Activated T-helper 1 cell treated with anti-CD3 and anti-CD28 coated beads, Interleukin-12 subunit alpha, Interleukin-12 subunit beta, Interleukin-2, Interleukin-4 antibody, amounts not matched to agents 30 ng/mL and 10 ng/mL and 1 ng/mL, durations not matched to agents 14 hours and 24 hours and 36 hours (primary cell): ENCODE measurements at regions of chr3 and their contacts with region 1.

Region 1: GRCh38 chr3:197298341-197298857 is at the start of gene DLG1:
- DNase-seq: peak; percentile 64
- H3K4me3 Mint-ChIP-seq: peak within 1 kb of the TSS; percentile 95
- H3K27ac Mint-ChIP-seq: peak within 1 kb of the TSS; percentile 96
- H3K4me1 Mint-ChIP-seq: peaks cover 39% of the 10 kb centered on the region
- H3K27me3 Mint-ChIP-seq: peaks cover 28% of the 10 kb centered on the region
- total RNA-seq, gene DLG1: 85.0 and 87.1 TPM in 2 replicates

Region 2: GRCh38 chr3:197456261-197457091 is 158.1 kb after region 1 on chr3:
- intact Hi-C with region 1: loop called (anchors 5 kb)
- DNase-seq: peak; percentile 36
- H3K4me3 Mint-ChIP-seq: peak overlapping the region; percentile 87
- H3K27ac Mint-ChIP-seq: peak overlapping the region; percentile 88
- H3K4me1 Mint-ChIP-seq: peaks cover 22% of the 10 kb centered on the region
- H3K27me3 Mint-ChIP-seq: peaks cover 22% of the 10 kb centered on the region

Region 3: DNA sequence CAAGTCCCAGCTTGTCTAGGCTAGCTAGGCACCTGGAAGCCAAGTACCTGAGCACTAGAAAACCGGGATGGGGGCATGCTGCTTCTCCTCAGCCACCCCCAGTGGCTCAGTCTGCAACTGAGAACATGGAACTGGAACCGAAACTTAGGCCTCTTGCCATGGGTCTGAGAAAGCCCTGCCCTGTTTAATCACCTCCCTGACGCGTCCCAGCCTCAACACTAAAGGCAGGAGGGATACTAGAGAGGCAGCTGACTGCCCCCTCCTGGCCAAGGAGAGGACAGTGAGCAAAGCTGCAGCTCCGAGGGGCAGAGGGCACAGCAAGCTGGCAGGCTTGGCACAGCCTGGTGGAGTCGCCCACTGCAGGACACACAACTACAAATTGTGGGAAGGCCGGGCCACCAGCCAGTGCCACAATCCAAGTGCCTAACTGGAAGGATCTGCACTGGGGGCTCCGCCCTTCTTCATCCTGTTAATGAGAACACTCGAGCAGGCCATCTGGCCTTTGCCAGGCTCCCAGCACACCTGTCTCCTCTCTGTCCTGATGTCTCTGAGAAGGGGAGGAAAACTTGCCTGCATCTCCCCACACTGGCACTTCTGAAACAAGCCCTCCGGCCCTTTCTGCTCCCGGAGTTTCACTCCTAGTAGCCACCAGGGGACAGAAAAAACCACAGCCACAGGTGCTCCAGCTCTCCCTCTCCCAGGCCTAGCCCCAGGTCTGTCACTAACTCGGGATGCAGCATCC is 203.7 kb after region 1 on chr3:
- intact Hi-C with region 1: loop called (anchors 2 kb)
- DNase-seq: peak; percentile 20
- H3K4me3 Mint-ChIP-seq: no peak overlapping the region
- H3K27ac Mint-ChIP-seq: no peak overlapping the region
- H3K4me1 Mint-ChIP-seq: no peaks in the 10 kb centered on the region
- H3K27me3 Mint-ChIP-seq: no peaks in the 10 kb centered on the region

Region 4: DNA sequence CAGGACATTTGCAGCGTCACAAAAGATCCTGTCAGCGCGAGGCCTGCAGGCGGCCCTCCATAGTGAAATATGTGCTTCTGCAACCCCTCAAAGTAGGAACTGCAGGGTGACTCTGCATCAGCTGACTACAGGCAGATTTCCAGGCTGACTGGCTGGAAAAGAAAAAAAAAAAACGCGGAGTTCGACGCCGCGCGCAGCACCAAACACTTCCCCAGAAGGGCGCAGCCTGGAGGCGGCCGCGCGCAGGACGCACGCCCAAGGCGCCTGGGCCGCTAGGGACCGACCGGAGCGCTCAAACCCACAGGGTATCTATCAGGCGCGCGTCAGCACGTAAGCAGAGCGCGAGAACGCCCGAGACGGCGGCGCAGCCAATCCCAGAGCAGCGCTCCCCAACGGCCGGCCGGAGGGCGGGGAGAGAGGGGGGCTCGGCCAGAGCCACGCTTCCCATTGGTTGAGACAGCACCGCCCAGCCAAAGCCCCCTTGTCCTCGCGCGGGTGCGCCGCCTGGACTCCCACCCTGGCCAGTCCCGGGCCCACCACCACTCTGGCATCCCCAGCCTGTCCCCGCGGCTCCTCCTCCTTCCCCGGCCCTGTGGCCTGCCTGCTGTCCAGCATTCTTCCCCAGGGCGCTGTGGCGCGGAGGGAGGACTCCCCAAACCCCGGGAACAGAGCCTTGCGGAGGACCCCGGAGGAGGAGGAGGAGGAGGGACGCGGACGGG is 256.3 kb after region 1 on chr3:
- intact Hi-C with region 1: loop called (anchors 5 kb)
- DNase-seq: peak; percentile 93
- H3K4me3 Mint-ChIP-seq: peak overlapping the region; percentile 93
- H3K27ac Mint-ChIP-seq: peak overlapping the region; percentile 97
- H3K4me1 Mint-ChIP-seq: peaks cover 39% of the 10 kb centered on the region
- H3K27me3 Mint-ChIP-seq: peaks cover 4% of the 10 kb centered on the region

Region 5: GRCh38 chr3:197736491-197737318 is 438.3 kb after region 1 on chr3 and contains the start of gene RUBCN:
- intact Hi-C with region 1: loop called (anchors 10 kb)
- DNase-seq: peak; percentile 94
- H3K4me3 Mint-ChIP-seq: peak within 1 kb of the TSS; percentile 90
- H3K27ac Mint-ChIP-seq: peak within 1 kb of the TSS; percentile 95
- H3K4me1 Mint-ChIP-seq: peaks cover 36% of the 10 kb centered on the region
- H3K27me3 Mint-ChIP-seq: peaks cover 4% of the 10 kb centered on the region
- total RNA-seq, gene RUBCN: 44.7 and 45.2 TPM in 2 replicates